GM12878 (cell line): ENCODE measurements at regions of chr11 and their contacts with region 1.

Region 1: GRCh38 chr11:86490582-86490981 is 115.9 kb downstream of the CCDC81 start:
- DNase-seq: no peak
- ATAC-seq: no peak
- H3K4me3 ChIP-seq: no peak overlapping the region
- H3K27ac ChIP-seq: no peak overlapping the region
- H3K4me1 ChIP-seq: no peaks in the 10 kb centered on the region
- H3K27me3 ChIP-seq: peaks cover 0 to 1% of the 10 kb centered on the region in 2 experiments; a peak in 3 of 4 replicates
- CTCF ChIP-seq: no peak
- EP300 ChIP-seq: no peak
- POLR2A ChIP-seq: no peak
- RAD21 ChIP-seq: no peak

Region 2: DNA sequence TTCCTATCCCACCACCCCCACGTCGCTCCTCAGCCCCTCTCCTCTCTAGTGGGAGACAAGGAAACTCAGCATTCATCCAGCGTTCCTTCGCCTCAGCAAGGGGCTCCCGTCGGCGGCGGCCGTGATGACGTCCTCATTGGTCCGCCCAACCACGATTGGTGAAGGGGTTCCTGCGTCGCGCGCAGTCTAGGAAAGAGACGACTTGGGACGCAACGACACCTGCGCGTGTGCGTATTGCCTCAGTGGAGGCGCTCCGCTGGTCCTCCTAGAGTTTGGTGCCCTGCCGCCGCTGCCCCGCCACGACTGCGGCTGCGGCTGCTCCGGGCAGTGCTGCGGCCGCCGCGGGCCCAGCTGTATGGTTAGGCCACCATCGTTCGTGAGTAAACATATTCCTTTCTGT is 59.3 kb before region 1 on chr11:
- CTCF ChIA-PET with region 1: no interaction called
- POLR2A ChIA-PET with region 1: no interaction called
- RAD21 ChIA-PET with region 1: no interaction called
- SMC1A ChIA-PET with region 1: no interaction called
- in situ Hi-C with region 1: no loop called
- intact Hi-C with region 1: no loop called
- DNase-seq: no peak
- ATAC-seq: no peak
- H3K4me3 ChIP-seq: no peak overlapping the region
- H3K27ac ChIP-seq: no peak overlapping the region
- H3K4me1 ChIP-seq: no peaks in the 10 kb centered on the region
- H3K27me3 ChIP-seq: no peaks in the 10 kb centered on the region; a peak in 1 of 4 replicates
- CTCF ChIP-seq: no peak
- EP300 ChIP-seq: no peak
- POLR2A ChIP-seq: no peak; the same call in 1 of the 2 replicates
- RAD21 ChIP-seq: no peak

Region 3: GRCh38 chr11:86515297-86516094 is 24.9 kb after region 1 on chr11:
- CTCF ChIA-PET with region 1: interaction called, 3 read pairs
- POLR2A ChIA-PET with region 1: interaction called, 3 read pairs
- RAD21 ChIA-PET with region 1: interaction called, 5 read pairs
- SMC1A ChIA-PET with region 1: interaction called, 10 read pairs
- in situ Hi-C with region 1: no loop called
- intact Hi-C with region 1: no loop called
- DNase-seq: no peak
- ATAC-seq: no peak
- H3K4me3 ChIP-seq: no peak overlapping the region
- H3K27ac ChIP-seq: no peak overlapping the region
- H3K4me1 ChIP-seq: no peaks in the 10 kb centered on the region
- H3K27me3 ChIP-seq: peaks cover 0 to 1% of the 10 kb centered on the region in 2 experiments; a peak in 1 of 4 replicates
- CTCF ChIP-seq: no peak
- EP300 ChIP-seq: no peak
- POLR2A ChIP-seq: no peak
- RAD21 ChIP-seq: no peak

Region 4: GRCh38 chr11:86876716-86877234 is 386.2 kb after region 1 on chr11:
- CTCF ChIA-PET with region 1: no interaction called
- POLR2A ChIA-PET with region 1: no interaction called
- RAD21 ChIA-PET with region 1: no interaction called
- SMC1A ChIA-PET with region 1: no interaction called
- in situ Hi-C with region 1: no loop called
- intact Hi-C with region 1: no loop called
- DNase-seq: no peak
- ATAC-seq: no peak
- H3K4me3 ChIP-seq: no peak overlapping the region
- H3K27ac ChIP-seq: no peak overlapping the region
- H3K4me1 ChIP-seq: no peaks in the 10 kb centered on the region
- H3K27me3 ChIP-seq: no peaks in the 10 kb centered on the region
- CTCF ChIP-seq: no peak
- EP300 ChIP-seq: no peak
- POLR2A ChIP-seq: no peak
- RAD21 ChIP-seq: no peak